Spleen (tissue), 13 donors: ENCODE measurements at regions of chr21 and their contacts with region 1.

Region 1: GRCh38 chr21:42009831-42010523 is at the start of gene ZBTB21:
- DNase-seq: peak; percentile 99
- H3K4me3 ChIP-seq: peak within 1 kb of the TSS; percentile 66 to 94 (median 72)
- H3K27ac ChIP-seq: peak within 1 kb of the TSS; percentile 96 to 99 (median 98)
- H3K4me1 ChIP-seq: peaks cover 5 to 33% (median 23%) of the 10 kb centered on the region in 6 donors
- H3K27me3 ChIP-seq: peaks cover 0 to 9% (median 0%) of the 10 kb centered on the region in 7 donors
- CTCF ChIP-seq: no peak
- POLR2A ChIP-seq: peak in 2 of 3 donors; percentile 76 to 89
- total RNA-seq, gene ZBTB21: 10.6 to 21.7 (median 16.2) TPM

Region 2: DNA sequence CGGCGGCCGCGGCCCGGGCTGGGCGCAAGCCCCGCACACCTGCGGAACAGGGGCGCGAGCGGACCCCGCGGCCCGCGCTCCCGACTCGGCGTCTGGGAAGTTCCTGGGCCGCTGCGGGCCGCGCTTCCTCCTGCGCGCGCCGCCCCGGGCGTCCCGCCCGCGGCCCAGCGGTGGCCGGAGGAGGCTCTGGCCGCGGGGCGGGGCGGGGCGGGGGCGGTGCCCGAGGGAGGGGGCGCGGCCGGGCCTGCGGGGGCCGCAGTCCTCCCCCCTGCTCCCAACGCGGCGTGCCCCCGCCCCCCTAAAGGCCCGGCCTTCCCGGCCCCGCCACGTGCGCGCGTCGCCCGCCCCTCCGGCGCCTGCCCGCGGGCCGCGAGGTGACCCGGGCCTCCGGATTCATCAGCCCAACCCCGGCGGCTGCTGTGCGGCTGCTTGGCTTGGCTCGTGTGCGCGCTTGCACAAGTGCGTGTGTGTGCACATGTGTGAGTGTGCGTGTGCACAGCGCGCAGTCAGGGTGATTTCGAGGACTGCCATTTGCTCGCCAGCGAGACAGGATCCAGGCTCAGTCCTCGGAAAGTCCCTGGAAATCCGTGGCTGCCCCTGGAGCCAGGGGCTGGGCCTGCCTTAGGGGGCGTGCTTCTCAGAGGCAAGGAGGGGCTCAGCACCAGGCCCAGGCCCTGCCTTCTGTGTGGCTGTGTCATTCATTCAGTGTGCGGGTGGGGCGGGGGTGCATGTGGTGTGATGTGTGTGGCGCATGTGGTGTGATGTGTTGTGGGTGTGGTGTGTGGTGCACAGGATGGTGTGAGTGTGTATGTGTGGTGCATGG is 55.9 kb before region 1 on chr21 and contains the start of gene C2CD2:
- intact Hi-C with region 1: loop called (anchors 10 kb)
- DNase-seq: peak; percentile 87
- H3K4me3 ChIP-seq: peak within 1 kb of the TSS; percentile 54 to 84 (median 64)
- H3K27ac ChIP-seq: peak within 1 kb of the TSS; percentile 66 to 94 (median 88)
- H3K4me1 ChIP-seq: peaks cover 16 to 90% (median 53%) of the 10 kb centered on the region in 6 donors
- H3K27me3 ChIP-seq: peaks cover 0 to 28% (median 8%) of the 10 kb centered on the region in 7 donors
- CTCF ChIP-seq: no peak
- POLR2A ChIP-seq: no peak
- total RNA-seq, gene C2CD2: 74.0 to 163 (median 105) TPM